AG04450 (cell line): ENCODE measurements at regions of chr15 and their contacts with region 1.

Region 1: DNA sequence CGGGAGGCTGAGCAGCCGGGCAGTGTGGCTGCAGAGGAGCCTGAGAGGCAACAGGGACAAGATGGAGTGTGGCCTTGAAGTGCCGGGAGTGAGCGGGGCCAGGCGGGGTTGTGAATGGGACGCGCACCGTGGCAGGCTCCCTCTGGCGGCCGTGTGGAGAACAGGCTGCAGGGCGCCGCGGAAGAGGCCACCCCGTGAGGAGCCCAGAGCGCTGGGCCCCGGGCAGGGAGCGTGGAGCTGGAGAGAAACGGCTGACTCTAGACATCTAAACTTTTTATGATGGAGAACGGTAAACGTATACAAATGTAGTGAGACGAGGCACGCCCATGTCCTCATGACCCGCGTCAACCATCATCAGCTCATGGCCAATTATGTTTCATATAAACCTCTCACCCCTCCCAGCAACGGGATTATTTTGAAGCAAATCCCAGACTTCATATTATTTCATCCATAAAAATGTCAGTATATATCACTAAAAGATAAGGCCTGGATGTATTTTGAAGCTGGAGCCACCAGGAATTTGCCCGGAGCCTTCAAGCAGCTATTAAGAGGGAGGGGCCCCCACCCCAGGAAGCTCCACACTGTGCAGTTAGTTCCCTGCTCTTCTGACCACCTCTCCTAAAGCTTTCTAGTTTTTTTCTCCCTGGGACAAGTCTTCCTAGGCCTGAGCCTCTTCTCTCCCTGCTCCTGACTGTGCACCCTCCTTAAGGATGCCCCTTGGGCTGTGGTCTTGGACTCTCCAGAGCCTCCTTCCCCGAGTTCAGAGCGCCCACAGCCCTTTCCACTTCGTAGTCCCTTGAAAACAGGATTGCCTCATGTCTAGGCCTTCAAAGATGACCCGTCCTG is 149.4 kb downstream of the SMAD6 start:
- DNase-seq: peak; percentile 45
- H3K4me3 ChIP-seq: no peak overlapping the region
- H3K27ac ChIP-seq: no peak overlapping the region
- H3K27me3 ChIP-seq: no peaks in the 10 kb centered on the region
- CTCF ChIP-seq: peak; percentile 96

Region 2: GRCh38 chr15:66619151-66619903 is 232.1 kb before region 1 on chr15:
- CTCF ChIA-PET with region 1: interaction called, 32 read pairs
- POLR2A ChIA-PET with region 1: no interaction called
- DNase-seq: peak; percentile 38
- H3K4me3 ChIP-seq: no peak overlapping the region
- H3K27ac ChIP-seq: no peak overlapping the region
- H3K27me3 ChIP-seq: no peaks in the 10 kb centered on the region
- CTCF ChIP-seq: peak; percentile 93

Region 3: GRCh38 chr15:66670762-66671580 is 180.5 kb before region 1 on chr15:
- CTCF ChIA-PET with region 1: no interaction called
- POLR2A ChIA-PET with region 1: no interaction called
- DNase-seq: no peak
- H3K4me3 ChIP-seq: no peak overlapping the region
- H3K27ac ChIP-seq: no peak overlapping the region
- H3K27me3 ChIP-seq: peaks cover 3% of the 10 kb centered on the region
- CTCF ChIP-seq: no peak

Region 4: GRCh38 chr15:66707310-66708082 is 144.0 kb before region 1 on chr15:
- CTCF ChIA-PET with region 1: interaction called, 63 read pairs
- POLR2A ChIA-PET with region 1: interaction called, 23 read pairs
- DNase-seq: no peak
- H3K4me3 ChIP-seq: peak overlapping the region; percentile 35; the same call in 1 of the 2 replicates
- H3K27ac ChIP-seq: peak overlapping the region; percentile 24
- H3K27me3 ChIP-seq: no peaks in the 10 kb centered on the region
- CTCF ChIP-seq: peak; percentile 41

Region 5: DNA sequence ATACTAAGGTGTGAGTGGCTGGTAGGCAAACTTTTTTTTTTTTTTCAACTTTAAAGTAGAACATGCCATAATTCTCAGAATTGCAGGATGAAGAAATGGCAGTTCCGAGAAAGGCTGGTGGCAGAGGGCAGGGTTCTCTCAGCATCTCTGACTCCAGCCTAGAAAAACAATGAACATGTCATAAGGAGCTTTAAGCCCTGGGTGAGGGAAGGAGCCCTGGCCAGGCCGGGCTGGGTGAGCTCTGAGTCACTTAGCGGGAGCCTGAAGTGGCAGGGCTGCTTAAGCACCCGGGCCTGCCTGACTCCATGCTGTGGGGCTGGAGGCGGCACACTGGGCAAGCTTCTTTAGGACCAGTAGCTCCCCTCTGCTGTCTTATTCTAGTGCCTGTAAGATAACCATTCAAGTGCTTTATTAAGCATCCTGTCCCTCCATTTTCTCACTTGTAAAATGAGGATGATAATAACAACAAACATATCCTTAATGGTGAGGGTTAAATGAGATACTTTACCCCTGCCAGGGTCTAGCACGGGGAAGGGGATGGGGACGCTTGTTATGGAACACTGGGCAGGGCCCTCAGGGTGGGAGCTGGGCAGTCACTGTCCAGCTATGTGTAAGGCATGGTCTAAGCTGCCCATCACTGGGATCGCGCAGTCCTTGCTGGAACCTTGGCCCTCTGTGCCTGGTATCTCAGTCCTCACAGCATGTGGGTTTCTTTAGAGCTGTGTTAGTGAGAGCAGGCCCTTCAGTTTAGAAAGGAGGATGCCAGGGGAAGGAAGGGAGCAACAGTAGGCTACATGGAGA is 131.0 kb before region 1 on chr15:
- CTCF ChIA-PET with region 1: interaction called, 14 read pairs
- POLR2A ChIA-PET with region 1: no interaction called
- DNase-seq: no peak
- H3K4me3 ChIP-seq: no peak overlapping the region
- H3K27ac ChIP-seq: peak overlapping the region; percentile 11
- H3K27me3 ChIP-seq: no peaks in the 10 kb centered on the region
- CTCF ChIP-seq: no peak

Region 6: DNA sequence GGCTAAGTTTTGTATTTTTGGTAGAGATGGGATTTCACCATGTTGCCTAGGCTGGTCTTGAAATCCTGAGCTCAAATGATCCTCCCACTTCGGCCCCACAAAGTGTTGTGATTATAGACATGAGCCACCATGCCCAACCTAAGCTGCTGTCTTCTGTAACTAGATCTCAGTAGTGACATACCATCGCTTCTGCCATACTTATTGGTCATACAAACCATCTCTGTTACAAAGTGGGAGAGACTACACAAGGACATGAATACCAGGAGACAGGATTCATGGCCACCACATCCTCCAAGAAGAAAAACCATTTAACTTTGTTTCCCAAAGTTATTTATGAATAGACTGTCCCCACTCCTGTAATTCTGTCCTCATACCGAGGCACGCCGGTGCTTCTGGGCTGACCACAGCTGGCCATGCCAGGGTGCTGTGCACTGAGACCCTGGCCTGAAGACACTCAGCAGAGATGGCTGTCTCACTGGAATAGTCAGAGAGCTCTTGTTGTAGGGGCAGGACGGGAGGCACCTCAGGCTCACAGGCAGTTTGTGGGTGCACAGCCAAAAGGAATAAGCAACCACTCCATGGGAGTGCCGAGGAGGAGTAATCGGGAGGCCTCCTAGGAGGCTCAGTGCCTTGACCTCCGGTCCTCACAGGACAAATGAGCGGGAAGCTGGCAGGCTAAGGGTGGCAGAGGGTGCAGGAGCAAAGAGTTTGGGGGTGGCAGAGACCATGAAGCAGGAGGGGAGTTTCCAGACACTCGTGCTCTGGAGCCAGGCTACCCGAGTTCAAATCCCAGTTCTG is 67.9 kb before region 1 on chr15:
- CTCF ChIA-PET with region 1: interaction called, 28 read pairs
- POLR2A ChIA-PET with region 1: no interaction called
- DNase-seq: no peak
- H3K4me3 ChIP-seq: no peak overlapping the region
- H3K27ac ChIP-seq: no peak overlapping the region
- H3K27me3 ChIP-seq: no peaks in the 10 kb centered on the region
- CTCF ChIP-seq: no peak

Region 7: DNA sequence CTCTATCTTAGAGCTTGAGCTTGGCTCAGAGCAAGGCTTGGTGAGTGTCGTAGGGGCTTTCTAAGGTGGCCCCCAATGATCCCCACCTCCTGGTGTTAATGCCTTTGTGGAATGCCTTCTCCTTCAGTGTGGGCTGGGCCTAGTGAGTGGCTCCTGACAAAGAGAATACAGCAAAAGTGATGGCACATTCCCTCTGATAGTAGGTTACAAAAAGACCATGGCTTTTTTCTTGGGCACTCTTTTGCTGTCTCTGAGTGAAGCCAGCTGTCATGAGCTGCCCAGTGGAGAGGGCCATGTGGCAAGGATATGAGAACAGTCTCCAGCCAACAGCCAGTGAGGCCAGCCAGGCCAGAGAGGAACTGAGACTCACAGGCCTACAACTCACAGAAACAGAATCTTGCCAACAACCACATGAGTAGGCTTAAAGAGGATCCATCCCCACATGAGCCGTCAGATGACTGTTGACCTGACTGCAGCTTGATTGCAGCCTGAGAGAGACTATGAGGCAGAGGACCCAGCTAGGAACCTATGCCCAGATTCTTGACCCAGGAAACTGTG is 16.0 kb before region 1 on chr15:
- CTCF ChIA-PET with region 1: interaction called, 14 read pairs
- POLR2A ChIA-PET with region 1: no interaction called
- DNase-seq: no peak
- H3K4me3 ChIP-seq: no peak overlapping the region
- H3K27ac ChIP-seq: no peak overlapping the region
- H3K27me3 ChIP-seq: no peaks in the 10 kb centered on the region
- CTCF ChIP-seq: no peak